Heart left ventricle (tissue), 16 donors: ENCODE measurements at regions of chr15 and their contacts with region 1.

Region 1: GRCh38 chr15:65792130-65792987 is at the start of gene DENND4A:
- DNase-seq: peak; percentile 98 to 99 (median 98)
- ATAC-seq: peak; percentile 96 to 98 (median 98)
- H3K4me3 ChIP-seq: peak within 1 kb of the TSS; percentile 57 to 97 (median 84)
- H3K27ac ChIP-seq: peak within 1 kb of the TSS; percentile 84 to 99 (median 94)
- H3K4me1 ChIP-seq: peaks cover 0 to 52% (median 14%) of the 10 kb centered on the region in 12 donors
- H3K27me3 ChIP-seq: no peaks in the 10 kb centered on the region
- CTCF ChIP-seq: no peak
- POLR2A ChIP-seq: peak in 1 of 2 donors; percentile 64
- total RNA-seq, gene DENND4A: 11.7 to 26.6 (median 15.7) TPM

Region 2: GRCh38 chr15:65832549-65833364 is 40.4 kb after region 1 on chr15:
- intact Hi-C with region 1: loop called in 5 of 10 experiments (anchors 1 to 5 kb)
- DNase-seq: peak; percentile 81 to 92 (median 89)
- ATAC-seq: peak; percentile 90 to 97 (median 95)
- H3K4me3 ChIP-seq: peak overlapping the region in 9 of 12 donors; percentile 9 to 50 (median 33)
- H3K27ac ChIP-seq: peak overlapping the region; percentile 72 to 92 (median 85)
- H3K4me1 ChIP-seq: peaks cover 12 to 70% (median 27%) of the 10 kb centered on the region in 12 donors
- H3K27me3 ChIP-seq: no peaks in the 10 kb centered on the region
- CTCF ChIP-seq: peak in 2 of 12 donors; percentile 27 to 28
- POLR2A ChIP-seq: no peak

Region 3: DNA sequence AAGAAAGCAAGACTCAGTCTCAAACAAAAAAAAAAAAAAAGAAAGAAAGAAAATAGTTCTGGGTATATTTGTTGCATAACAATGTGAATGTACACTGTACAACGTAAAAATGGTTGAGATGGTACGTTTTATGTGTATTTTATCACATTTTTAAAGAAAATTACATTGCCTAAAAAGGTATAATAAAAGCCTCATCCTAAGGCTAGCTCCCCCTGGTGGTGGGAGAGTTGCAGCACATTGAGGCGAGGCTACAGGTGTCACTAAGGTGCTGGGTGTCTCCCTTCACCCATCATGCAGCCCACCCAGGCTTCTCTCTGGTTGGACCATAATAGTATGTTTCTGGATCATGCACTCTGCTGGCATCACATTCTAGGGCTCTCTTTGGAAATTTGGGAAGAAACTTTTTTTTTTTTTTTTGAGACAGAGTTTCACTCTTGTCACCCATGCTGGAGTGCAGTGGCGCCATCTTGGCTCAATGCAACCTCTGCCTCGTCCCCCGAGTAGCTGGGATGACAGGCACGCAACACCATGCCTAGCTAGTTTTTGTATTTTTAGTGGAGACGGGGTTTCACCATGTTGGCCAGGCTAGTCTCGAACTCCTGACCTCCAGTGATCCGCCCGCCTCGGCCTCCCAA is 64.6 kb after region 1 on chr15:
- intact Hi-C with region 1: loop called in 2 of 10 experiments (anchors 5 to 10 kb)
- DNase-seq: peak; percentile 47 to 73 (median 58)
- ATAC-seq: peak in 3 of 4 donors; percentile 42 to 61 (median 49)
- H3K4me3 ChIP-seq: no peak overlapping the region
- H3K27ac ChIP-seq: no peak overlapping the region
- H3K4me1 ChIP-seq: peaks cover 0 to 4% (median 0%) of the 10 kb centered on the region in 12 donors
- H3K27me3 ChIP-seq: no peaks in the 10 kb centered on the region
- CTCF ChIP-seq: peak; percentile 69 to 88 (median 80)
- POLR2A ChIP-seq: no peak

Region 4: GRCh38 chr15:65869127-65869953 is 77.0 kb after region 1 on chr15 and contains the start of gene RAB11A:
- intact Hi-C with region 1: loop called in 3 of 10 experiments (anchors 1 to 5 kb)
- DNase-seq: peak; percentile 95 to 98 (median 98)
- ATAC-seq: peak; percentile 98 to 99 (median 99)
- H3K4me3 ChIP-seq: peak within 1 kb of the TSS; percentile 70 to 98 (median 88)
- H3K27ac ChIP-seq: peak within 1 kb of the TSS; percentile 86 to 97 (median 94)
- H3K4me1 ChIP-seq: peaks cover 0 to 38% (median 19%) of the 10 kb centered on the region in 12 donors
- H3K27me3 ChIP-seq: no peaks in the 10 kb centered on the region
- CTCF ChIP-seq: peak in 11 of 12 donors; percentile 6 to 67 (median 43)
- POLR2A ChIP-seq: peak; percentile 47 to 88
- total RNA-seq, gene RAB11A: 149 to 212 (median 162) TPM